Activated B cell treated with CpG ODN at 0.5 μM for 24 hours (primary cell): ENCODE measurements at regions of chr2 and their contacts with region 1.

Region 1: DNA sequence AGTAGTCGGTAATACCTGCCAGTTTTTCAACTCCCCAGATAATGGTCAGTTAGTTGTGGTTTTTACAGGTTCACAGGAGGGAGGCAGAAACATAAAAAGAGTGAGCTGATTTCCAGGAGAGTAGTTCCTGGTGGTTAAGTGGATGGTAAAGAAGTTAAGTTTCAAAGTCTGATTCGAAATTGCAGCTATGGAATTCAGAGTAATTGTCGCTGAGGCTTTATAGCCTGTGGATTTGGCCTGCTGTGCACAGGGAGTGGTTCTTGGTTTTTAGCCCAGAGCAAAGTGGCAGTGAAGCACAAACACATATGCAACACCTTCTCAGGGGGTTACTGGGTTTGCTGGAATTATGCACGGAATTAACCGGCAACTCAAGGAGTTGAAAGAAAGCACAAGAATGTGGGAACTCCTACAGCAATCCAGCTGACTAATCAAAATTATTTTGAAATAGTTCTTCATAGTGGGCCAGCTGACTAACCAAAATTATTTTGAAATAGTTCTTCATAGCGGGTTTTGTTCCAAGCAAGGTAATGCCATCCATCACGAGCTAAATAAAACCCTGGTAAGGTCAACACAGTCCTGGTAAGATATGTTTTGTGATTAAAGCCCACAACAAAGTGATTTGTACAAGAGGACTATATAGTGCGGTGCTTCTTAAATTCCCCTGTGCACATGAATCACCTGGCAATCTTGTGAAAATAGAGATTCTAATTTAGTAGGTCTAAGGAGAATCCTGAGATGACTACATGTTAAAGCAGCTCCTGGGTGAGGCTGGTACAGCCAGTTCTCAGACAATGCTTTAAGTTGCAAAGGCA is 94.4 kb downstream of the SGPP2 start:
- DNase-seq: no peak
- ATAC-seq: no peak
- H3K4me3 Mint-ChIP-seq: no peak overlapping the region
- H3K27ac Mint-ChIP-seq: no peak overlapping the region
- H3K4me1 Mint-ChIP-seq: no peaks in the 10 kb centered on the region
- H3K27me3 Mint-ChIP-seq: no peaks in the 10 kb centered on the region
- CTCF ChIP-seq: no peak

Region 2: GRCh38 chr2:222433332-222434173 is 85.2 kb before region 1 on chr2:
- CTCF ChIA-PET with region 1: no interaction called
- POLR2A ChIA-PET with region 1: no interaction called
- intact Hi-C with region 1: no loop called
- DNase-seq: no peak
- ATAC-seq: peak; percentile 69
- H3K4me3 Mint-ChIP-seq: peak overlapping the region; percentile 67
- H3K27ac Mint-ChIP-seq: peak overlapping the region; percentile 67
- H3K4me1 Mint-ChIP-seq: peaks cover 30% of the 10 kb centered on the region
- H3K27me3 Mint-ChIP-seq: no peaks in the 10 kb centered on the region
- CTCF ChIP-seq: no peak

Region 3: DNA sequence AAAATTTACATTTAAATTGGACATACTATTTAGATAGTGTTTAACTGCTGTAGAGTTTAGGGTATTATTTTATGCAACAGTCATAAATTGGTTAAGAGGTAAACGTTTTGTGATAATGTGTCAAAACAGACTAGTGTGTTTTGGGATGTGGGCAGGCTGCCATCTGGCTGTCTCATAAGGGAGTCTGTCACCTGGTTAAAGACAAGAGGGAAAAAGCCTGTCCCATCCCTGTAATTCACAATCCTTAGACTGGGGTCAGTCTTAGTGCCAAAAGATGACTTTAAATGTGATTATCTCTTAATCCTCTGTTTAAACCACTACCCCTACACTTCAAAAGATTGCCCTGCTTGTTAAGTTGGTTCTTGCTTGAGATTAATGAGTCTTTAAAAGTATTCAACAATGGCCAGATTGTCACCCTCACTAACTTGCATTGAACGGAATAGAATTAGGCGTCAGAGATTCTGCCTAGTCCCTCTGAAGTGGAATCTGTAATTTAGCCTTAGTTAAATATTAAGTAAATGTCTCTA is 35.2 kb before region 1 on chr2:
- CTCF ChIA-PET with region 1: no interaction called
- POLR2A ChIA-PET with region 1: interaction called, 12 read pairs
- intact Hi-C with region 1: no loop called
- DNase-seq: no peak
- ATAC-seq: no peak
- H3K4me3 Mint-ChIP-seq: no peak overlapping the region
- H3K27ac Mint-ChIP-seq: no peak overlapping the region
- H3K4me1 Mint-ChIP-seq: no peaks in the 10 kb centered on the region
- H3K27me3 Mint-ChIP-seq: no peaks in the 10 kb centered on the region
- CTCF ChIP-seq: no peak

Region 4: GRCh38 chr2:222494104-222494739 is 24.6 kb before region 1 on chr2:
- CTCF ChIA-PET with region 1: no interaction called
- POLR2A ChIA-PET with region 1: no interaction called
- intact Hi-C with region 1: no loop called
- DNase-seq: no peak
- ATAC-seq: no peak
- H3K4me3 Mint-ChIP-seq: no peak overlapping the region
- H3K27ac Mint-ChIP-seq: no peak overlapping the region
- H3K4me1 Mint-ChIP-seq: no peaks in the 10 kb centered on the region
- H3K27me3 Mint-ChIP-seq: no peaks in the 10 kb centered on the region
- CTCF ChIP-seq: no peak